Activated CD4-positive, alpha-beta memory T cell treated with anti-CD3 and anti-CD28 coated beads, Interleukin-2, amount 10 ng/mL, durations not matched to agents 7 days and 5 days (primary cell): ENCODE measurements at regions of chr12 and their contacts with region 1.

Region 1: GRCh38 chr12:49358483-49359141 is 8.7 kb upstream of the SPATS2 start:
- DNase-seq: peak; percentile 60
- H3K4me3 Mint-ChIP-seq: no peak overlapping the region
- H3K27ac Mint-ChIP-seq: no peak overlapping the region
- H3K4me1 Mint-ChIP-seq: peaks cover 3% of the 10 kb centered on the region
- H3K27me3 Mint-ChIP-seq: peaks cover 35% of the 10 kb centered on the region

Region 2: DNA sequence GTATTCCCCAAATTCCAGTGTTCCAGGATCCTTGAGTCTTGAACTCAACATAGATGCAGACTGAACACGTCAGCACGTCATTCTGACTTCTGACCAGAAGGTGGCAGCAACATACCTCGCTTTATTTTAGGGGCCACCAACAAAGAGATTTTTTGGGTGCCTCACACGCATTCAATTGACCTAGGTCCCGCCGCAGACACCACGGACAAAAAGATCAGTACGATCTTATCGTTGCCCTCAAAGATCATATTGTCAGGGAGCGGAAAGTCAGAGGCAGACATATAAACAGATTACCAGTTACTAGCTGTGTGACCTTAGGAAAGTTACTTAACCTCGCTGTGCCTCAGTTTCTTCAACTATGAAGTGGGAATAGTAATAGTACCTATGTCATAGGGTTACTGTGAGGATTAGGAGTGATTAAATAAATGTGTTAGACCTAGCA is 70.2 kb before region 1 on chr12:
- CTCF ChIA-PET with region 1: interaction called, 161 read pairs
- POLR2A ChIA-PET with region 1: interaction called, 3 read pairs
- DNase-seq: peak; percentile 77
- H3K4me3 Mint-ChIP-seq: no peak overlapping the region
- H3K27ac Mint-ChIP-seq: no peak overlapping the region
- H3K4me1 Mint-ChIP-seq: peaks cover 8% of the 10 kb centered on the region
- H3K27me3 Mint-ChIP-seq: peaks cover 34% of the 10 kb centered on the region

Region 3: DNA sequence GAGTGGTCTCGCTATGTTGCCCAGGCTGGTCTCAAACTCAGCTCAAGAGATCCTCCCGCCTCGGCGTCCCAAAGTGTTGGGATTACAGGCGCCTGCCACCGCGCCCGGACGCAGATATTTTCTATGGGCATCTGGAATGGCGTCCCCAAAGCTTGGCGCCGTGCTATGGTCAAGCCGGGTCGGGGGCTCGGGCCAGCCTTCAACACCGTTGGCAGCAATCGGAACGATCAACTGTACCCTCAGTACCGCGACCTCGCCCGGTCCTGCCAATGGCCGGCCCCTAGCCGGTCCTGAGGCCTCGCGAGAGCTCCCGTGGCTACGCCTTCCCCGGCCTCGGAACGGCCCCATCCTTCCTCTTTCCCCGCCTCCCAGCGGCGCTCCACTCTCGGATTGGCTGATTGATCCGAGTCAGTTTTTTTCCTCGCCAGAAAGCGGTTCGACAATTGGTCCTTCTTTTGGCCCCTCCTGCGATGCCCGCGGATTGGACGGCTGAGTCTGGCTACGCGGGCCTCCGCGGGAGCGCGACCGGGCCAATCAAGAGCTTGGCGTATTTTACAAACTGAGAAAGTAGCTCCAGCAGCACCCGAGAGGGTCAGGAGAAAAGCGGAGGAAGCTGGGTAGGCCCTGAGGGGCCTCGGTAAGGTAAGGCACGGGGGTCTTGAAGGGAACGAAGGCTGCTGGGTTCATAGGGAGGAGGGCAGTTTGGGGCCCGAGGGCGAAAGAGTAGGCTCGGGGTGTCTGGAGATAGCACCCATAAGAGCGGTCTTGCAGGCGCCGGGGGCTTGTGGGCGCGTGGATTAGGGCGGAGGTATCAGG is 35.7 kb before region 1 on chr12 and contains the start of gene TROAP:
- CTCF ChIA-PET with region 1: interaction called, 14 read pairs
- POLR2A ChIA-PET with region 1: interaction called, 3 read pairs
- DNase-seq: peak; percentile 99
- H3K4me3 Mint-ChIP-seq: peak within 1 kb of the TSS; percentile 94
- H3K27ac Mint-ChIP-seq: peak within 1 kb of the TSS; percentile 86
- H3K4me1 Mint-ChIP-seq: peaks cover 33% of the 10 kb centered on the region
- H3K27me3 Mint-ChIP-seq: no peaks in the 10 kb centered on the region
- total RNA-seq, gene TROAP: 75.1 to 79.5 TPM

Region 4: GRCh38 chr12:49347384-49348237 is 11.0 kb before region 1 on chr12:
- CTCF ChIA-PET with region 1: interaction called, 65 read pairs
- POLR2A ChIA-PET with region 1: interaction called, 4 read pairs
- DNase-seq: peak; percentile 80
- H3K4me3 Mint-ChIP-seq: peak overlapping the region; percentile 57
- H3K27ac Mint-ChIP-seq: no peak overlapping the region
- H3K4me1 Mint-ChIP-seq: peaks cover 34% of the 10 kb centered on the region
- H3K27me3 Mint-ChIP-seq: peaks cover 71% of the 10 kb centered on the region

Region 5: DNA sequence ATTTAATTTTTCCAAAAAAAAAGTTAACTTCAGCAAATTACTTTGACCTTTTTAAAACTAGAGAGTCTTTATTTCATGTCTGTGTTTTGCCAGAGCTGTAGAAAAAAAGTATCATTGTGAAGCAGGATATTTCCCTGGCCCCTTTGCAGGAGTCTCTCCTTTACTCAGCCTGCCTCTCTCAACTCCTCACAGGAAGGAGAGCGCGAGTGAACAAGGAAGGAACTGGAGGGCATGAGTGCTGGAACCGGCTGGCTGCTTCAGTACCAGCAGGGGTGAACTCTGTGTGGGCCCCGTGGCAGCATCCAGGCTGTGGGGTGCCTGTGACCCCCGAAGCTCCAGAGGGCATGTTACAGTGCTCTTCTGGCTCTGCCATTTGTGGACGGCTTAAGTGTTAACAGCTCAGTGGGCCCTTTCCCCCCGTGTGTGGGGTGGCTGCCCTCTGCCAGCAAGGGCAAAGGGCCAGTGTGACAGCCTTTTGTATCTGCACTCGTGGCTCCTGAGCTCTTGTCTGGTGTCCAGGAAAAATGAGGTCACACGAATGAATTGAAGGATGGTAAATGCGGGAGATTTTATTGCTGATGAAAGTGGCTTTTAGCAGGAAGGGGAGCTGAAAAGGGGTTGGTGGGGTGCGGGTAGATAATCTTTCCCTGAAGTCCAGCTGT is 103.6 kb after region 1 on chr12:
- CTCF ChIA-PET with region 1: interaction called, 10 read pairs
- POLR2A ChIA-PET with region 1: no interaction called
- DNase-seq: no peak
- H3K4me3 Mint-ChIP-seq: no peak overlapping the region
- H3K27ac Mint-ChIP-seq: no peak overlapping the region
- H3K4me1 Mint-ChIP-seq: no peaks in the 10 kb centered on the region
- H3K27me3 Mint-ChIP-seq: no peaks in the 10 kb centered on the region

Region 6: GRCh38 chr12:49515266-49515665 is 156.7 kb after region 1 on chr12:
- CTCF ChIA-PET with region 1: interaction called, 237 read pairs
- POLR2A ChIA-PET with region 1: interaction called, 14 read pairs
- DNase-seq: no peak
- H3K4me3 Mint-ChIP-seq: no peak overlapping the region
- H3K27ac Mint-ChIP-seq: no peak overlapping the region
- H3K4me1 Mint-ChIP-seq: peaks cover 1% of the 10 kb centered on the region
- H3K27me3 Mint-ChIP-seq: no peaks in the 10 kb centered on the region

Region 7: GRCh38 chr12:49567611-49568441 is 209.2 kb after region 1 on chr12 and contains the start of gene MCRS1:
- CTCF ChIA-PET with region 1: interaction called, 32 read pairs
- POLR2A ChIA-PET with region 1: no interaction called
- DNase-seq: peak; percentile 90
- H3K4me3 Mint-ChIP-seq: peak within 1 kb of the TSS; percentile 97
- H3K27ac Mint-ChIP-seq: peak within 1 kb of the TSS; percentile 89
- H3K4me1 Mint-ChIP-seq: peaks cover 65% of the 10 kb centered on the region
- H3K27me3 Mint-ChIP-seq: no peaks in the 10 kb centered on the region
- total RNA-seq, gene MCRS1: 70.5 to 73.1 TPM